IMR-90 (cell line): ENCODE measurements at regions of chr19 and their contacts with region 1.

Region 1: DNA sequence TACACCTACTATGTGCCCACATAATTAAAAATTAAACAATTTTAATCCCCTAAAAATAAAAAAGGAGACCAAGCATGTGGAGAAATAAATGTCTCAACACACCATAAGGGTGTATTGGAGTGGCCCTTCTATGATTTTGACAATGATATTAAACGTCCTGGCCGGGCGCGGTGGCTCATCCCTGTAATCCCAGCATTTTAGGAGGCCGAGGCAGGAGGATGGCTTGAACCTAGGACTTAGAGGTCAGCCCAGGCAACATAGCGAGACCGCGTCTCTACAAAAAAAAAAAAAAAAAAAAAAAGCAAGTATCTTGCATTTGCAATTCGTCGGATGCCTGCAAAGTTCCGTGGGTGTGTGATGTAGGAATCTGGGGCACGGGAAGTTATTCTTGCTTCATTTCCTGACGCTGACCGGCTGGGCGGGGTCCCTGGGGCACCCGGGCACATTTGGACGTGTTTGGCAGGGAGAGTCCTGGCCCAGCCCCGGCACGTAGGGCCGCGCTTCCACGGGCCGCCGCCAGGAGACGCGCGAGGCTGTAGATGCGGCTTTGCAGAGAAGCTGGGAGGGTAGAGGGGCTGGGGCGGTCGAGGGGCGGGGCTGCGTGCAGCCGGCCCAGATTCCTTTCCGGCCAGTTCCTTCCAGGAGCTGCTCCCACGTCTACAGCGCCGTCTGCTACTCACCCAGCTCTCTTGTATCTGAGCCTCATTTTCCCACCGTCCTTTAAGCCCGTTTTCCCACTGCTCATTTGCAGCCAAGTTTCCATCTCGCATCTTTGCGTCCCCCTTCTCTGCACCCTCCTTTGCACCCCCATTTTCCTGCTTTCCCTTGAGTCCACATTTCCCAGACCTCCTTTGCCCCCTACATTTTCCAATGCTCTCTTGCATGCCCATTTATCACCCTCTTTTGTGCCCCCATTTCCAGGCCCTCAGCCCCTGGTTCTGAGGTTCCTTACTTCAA is 2.2 kb upstream of the TSPAN16 start:
- DNase-seq: peak; percentile 87
- ATAC-seq: peak; percentile 100
- H3K4me3 ChIP-seq: peak overlapping the region; percentile 16; the same call in 1 of the 2 replicates
- H3K27ac ChIP-seq: peak overlapping the region; percentile 34
- H3K4me1 ChIP-seq: 0 out of 2 replicates have a peak, but pooled peaks cover 1% of the 10 kb centered on the region
- H3K27me3 ChIP-seq: peaks cover 4% of the 10 kb centered on the region; the same call in 1 of the 2 replicates
- CTCF ChIP-seq: peak; percentile 97
- POLR2A ChIP-seq: no peak
- RAD21 ChIP-seq: peak; percentile 92

Region 2: DNA sequence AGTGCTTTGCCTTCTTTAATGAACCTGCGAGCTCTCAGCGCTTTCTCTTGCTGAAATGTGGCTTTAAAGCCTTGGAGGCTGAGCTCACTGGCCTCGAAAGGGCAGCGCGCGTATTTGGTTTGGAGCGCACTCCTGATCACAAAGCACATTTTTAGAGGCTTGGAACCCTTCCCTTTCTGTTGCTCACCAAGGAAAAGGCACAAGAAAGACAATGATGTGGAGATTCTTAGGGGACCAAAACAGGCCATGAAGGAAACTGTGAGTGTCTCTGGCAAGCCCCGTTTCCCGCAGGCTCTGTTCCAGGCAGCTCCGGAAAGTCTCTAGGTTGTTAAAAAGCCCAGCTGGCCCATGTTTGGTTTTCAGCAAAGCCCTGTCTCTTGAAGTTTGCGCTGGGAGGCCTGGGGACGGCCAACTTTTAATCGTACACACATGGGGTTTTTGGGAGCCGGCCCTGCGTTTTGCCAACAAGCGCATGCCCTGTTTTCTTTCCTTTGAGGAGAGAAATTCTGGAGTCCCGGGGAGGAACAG is 128.8 kb before region 1 on chr19:
- CTCF ChIA-PET with region 1: no interaction called
- POLR2A ChIA-PET with region 1: no interaction called
- dilution Hi-C with region 1: no loop called
- in situ Hi-C with region 1: no loop called
- intact Hi-C with region 1: no loop called
- DNase-seq: peak; percentile 61
- ATAC-seq: no peak; the same call in 1 of the 2 replicates
- H3K4me3 ChIP-seq: no peak overlapping the region
- H3K27ac ChIP-seq: peak overlapping the region; percentile 64; the same call in 1 of the 2 replicates
- H3K4me1 ChIP-seq: peaks cover 9% of the 10 kb centered on the region
- H3K27me3 ChIP-seq: no peaks in the 10 kb centered on the region
- CTCF ChIP-seq: no peak
- POLR2A ChIP-seq: no peak
- RAD21 ChIP-seq: no peak

Region 3: GRCh38 chr19:11346092-11346940 is 52.6 kb after region 1 on chr19 and contains the starts of genes CCDC159 and TMEM205:
- CTCF ChIA-PET with region 1: interaction called, 4 read pairs
- POLR2A ChIA-PET with region 1: no interaction called
- dilution Hi-C with region 1: no loop called
- in situ Hi-C with region 1: no loop called
- intact Hi-C with region 1: loop called (anchors 1 kb)
- DNase-seq: peak; percentile 99
- ATAC-seq: peak; percentile 96
- H3K4me3 ChIP-seq: peak within 1 kb of the TSS; percentile 73
- H3K27ac ChIP-seq: peak within 1 kb of the TSS; percentile 80
- H3K4me1 ChIP-seq: peaks cover 8% of the 10 kb centered on the region
- H3K27me3 ChIP-seq: no peaks in the 10 kb centered on the region
- CTCF ChIP-seq: 0 out of 2 replicates have a peak, but pooled peaks have one; percentile 22
- POLR2A ChIP-seq: peak; percentile 67
- RAD21 ChIP-seq: peak; percentile 17; the same call in 1 of the 2 replicates
- total RNA-seq, gene CCDC159: 4.4 and 4.7 TPM in 2 replicates
- total RNA-seq, gene TMEM205: 87.5 and 136 TPM in 2 replicates

Region 4: GRCh38 chr19:11380653-11381534 is 87.2 kb after region 1 on chr19:
- CTCF ChIA-PET with region 1: interaction called, 8 read pairs
- POLR2A ChIA-PET with region 1: interaction called, 14 read pairs
- dilution Hi-C with region 1: no loop called
- in situ Hi-C with region 1: no loop called
- intact Hi-C with region 1: loop called (anchors 1 kb)
- DNase-seq: peak; percentile 93
- ATAC-seq: peak; percentile 88
- H3K4me3 ChIP-seq: peak overlapping the region; percentile 86
- H3K27ac ChIP-seq: peak overlapping the region; percentile 62
- H3K4me1 ChIP-seq: peaks cover 20% of the 10 kb centered on the region
- H3K27me3 ChIP-seq: no peaks in the 10 kb centered on the region; the same call in 1 of the 2 replicates
- CTCF ChIP-seq: peak; percentile 53
- POLR2A ChIP-seq: peak; percentile 91
- RAD21 ChIP-seq: peak; percentile 43; the same call in 1 of the 2 replicates

Region 5: DNA sequence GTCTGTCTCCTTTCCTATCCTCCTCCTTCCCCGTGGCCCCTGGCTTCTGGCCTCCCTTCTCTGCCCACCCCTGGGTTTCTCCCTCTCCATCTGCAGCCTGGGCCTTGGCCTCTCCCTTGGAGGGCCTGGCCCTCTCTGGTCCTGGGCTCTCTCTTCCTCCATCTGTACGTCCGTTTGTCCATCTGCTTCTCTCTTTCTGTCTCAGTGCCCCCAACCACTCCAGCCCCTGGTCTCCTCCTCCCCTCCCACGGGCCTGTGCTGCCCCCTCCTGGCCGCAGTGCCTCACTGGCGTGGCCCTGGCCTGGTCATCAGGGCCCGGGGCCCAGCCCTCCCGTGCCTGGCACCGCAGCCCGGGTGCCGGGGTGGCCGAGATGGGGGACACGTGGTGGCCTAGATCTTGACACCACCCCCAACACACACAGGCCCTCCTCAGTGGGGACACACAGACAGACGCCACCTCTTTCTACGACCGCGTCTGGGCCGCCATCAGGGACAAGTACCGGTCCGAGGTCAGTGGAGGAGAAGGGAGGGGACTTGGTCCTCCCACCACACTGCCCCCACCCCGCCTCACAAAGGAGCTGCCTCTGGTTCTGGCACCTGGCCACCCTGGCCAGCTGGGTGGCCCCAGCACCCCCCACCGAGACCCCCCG is 153.1 kb after region 1 on chr19:
- CTCF ChIA-PET with region 1: no interaction called
- POLR2A ChIA-PET with region 1: no interaction called
- dilution Hi-C with region 1: no loop called
- in situ Hi-C with region 1: no loop called
- intact Hi-C with region 1: loop called (anchors 1 kb)
- DNase-seq: no peak
- ATAC-seq: peak; percentile 82
- H3K4me3 ChIP-seq: no peak overlapping the region
- H3K27ac ChIP-seq: no peak overlapping the region
- H3K4me1 ChIP-seq: no peaks in the 10 kb centered on the region; the same call in 1 of the 2 replicates
- H3K27me3 ChIP-seq: no peaks in the 10 kb centered on the region
- CTCF ChIP-seq: peak; percentile 70
- POLR2A ChIP-seq: no peak
- RAD21 ChIP-seq: peak; percentile 81

Region 6: GRCh38 chr19:11587302-11587974 is 293.7 kb after region 1 on chr19:
- CTCF ChIA-PET with region 1: no interaction called
- POLR2A ChIA-PET with region 1: no interaction called
- dilution Hi-C with region 1: no loop called
- in situ Hi-C with region 1: no loop called
- intact Hi-C with region 1: loop called (anchors 5 kb)
- DNase-seq: peak; percentile 60
- ATAC-seq: peak; percentile 100
- H3K4me3 ChIP-seq: no peak overlapping the region
- H3K27ac ChIP-seq: no peak overlapping the region
- H3K4me1 ChIP-seq: no peaks in the 10 kb centered on the region
- H3K27me3 ChIP-seq: no peaks in the 10 kb centered on the region; the same call in 1 of the 2 replicates
- CTCF ChIP-seq: peak; percentile 91
- POLR2A ChIP-seq: 0 out of 2 replicates have a peak, but pooled peaks have one; percentile 32
- RAD21 ChIP-seq: peak; percentile 88